MCF 10A (cell line): ENCODE measurements at regions of chr7 and their contacts with region 1.

Region 1: GRCh38 chr7:42831718-42832431 is 80.0 kb downstream of the C7orf25 start:
- DNase-seq: peak; percentile 61
- H3K4me3 Mint-ChIP-seq: no peak overlapping the region
- H3K27ac Mint-ChIP-seq: no peak overlapping the region
- H3K4me1 Mint-ChIP-seq: peaks cover 16% of the 10 kb centered on the region
- H3K27me3 Mint-ChIP-seq: no peaks in the 10 kb centered on the region
- CTCF ChIP-seq: peak; percentile 61

Region 2: GRCh38 chr7:41679566-41679965 is 1152.3 kb before region 1 on chr7:
- CTCF ChIA-PET with region 1: no interaction called
- POLR2A ChIA-PET with region 1: no interaction called
- intact Hi-C with region 1: no loop called
- DNase-seq: no peak
- H3K4me3 Mint-ChIP-seq: no peak overlapping the region
- H3K27ac Mint-ChIP-seq: no peak overlapping the region
- H3K4me1 Mint-ChIP-seq: no peaks in the 10 kb centered on the region
- H3K27me3 Mint-ChIP-seq: no peaks in the 10 kb centered on the region
- CTCF ChIP-seq: no peak

Region 3: DNA sequence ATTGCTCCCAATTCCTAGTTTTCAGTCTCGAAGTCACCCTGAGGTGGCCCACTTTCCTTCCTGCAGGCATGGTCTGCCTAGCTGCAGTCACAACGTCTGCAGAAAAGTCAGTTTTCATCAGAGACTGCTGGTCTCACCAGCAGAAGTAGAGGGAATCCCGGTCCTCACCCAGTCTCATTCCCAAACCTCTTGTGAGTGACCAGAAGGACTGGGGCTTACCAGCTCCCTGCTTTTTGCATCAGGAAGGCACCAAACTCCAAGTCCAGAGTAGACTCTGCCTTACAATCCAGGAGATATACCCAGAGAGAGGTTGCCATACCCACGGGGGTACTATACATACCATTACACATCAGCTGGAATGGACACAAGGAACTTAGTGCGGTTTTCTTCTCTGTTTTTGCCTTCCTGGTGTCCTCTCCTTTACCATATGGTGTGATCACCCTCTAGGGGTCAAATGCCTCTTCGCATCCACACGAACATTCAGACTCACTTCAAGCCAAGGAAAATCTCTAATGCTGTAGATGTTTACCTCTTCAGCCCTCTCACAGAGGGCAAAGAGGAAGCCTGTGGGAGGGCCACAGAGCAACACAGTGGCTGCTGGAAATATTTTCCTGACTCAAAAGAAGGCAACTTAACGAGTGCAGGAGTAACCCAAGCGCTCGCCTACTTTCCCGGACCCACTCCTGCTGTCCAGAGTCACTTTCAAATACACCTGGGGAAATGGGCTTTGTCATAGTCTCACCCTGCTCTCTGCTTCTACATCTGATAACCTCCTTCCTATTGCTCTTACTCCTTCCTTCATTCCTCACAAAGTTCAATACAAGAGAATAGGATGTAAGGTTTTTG is 140.9 kb before region 1 on chr7:
- CTCF ChIA-PET with region 1: interaction called, 11 read pairs
- POLR2A ChIA-PET with region 1: interaction called, 3 read pairs
- intact Hi-C with region 1: no loop called
- DNase-seq: peak; percentile 76
- H3K4me3 Mint-ChIP-seq: no peak overlapping the region
- H3K27ac Mint-ChIP-seq: peak overlapping the region; percentile 19
- H3K4me1 Mint-ChIP-seq: no peaks in the 10 kb centered on the region
- H3K27me3 Mint-ChIP-seq: no peaks in the 10 kb centered on the region
- CTCF ChIP-seq: peak; percentile 71

Region 4: DNA sequence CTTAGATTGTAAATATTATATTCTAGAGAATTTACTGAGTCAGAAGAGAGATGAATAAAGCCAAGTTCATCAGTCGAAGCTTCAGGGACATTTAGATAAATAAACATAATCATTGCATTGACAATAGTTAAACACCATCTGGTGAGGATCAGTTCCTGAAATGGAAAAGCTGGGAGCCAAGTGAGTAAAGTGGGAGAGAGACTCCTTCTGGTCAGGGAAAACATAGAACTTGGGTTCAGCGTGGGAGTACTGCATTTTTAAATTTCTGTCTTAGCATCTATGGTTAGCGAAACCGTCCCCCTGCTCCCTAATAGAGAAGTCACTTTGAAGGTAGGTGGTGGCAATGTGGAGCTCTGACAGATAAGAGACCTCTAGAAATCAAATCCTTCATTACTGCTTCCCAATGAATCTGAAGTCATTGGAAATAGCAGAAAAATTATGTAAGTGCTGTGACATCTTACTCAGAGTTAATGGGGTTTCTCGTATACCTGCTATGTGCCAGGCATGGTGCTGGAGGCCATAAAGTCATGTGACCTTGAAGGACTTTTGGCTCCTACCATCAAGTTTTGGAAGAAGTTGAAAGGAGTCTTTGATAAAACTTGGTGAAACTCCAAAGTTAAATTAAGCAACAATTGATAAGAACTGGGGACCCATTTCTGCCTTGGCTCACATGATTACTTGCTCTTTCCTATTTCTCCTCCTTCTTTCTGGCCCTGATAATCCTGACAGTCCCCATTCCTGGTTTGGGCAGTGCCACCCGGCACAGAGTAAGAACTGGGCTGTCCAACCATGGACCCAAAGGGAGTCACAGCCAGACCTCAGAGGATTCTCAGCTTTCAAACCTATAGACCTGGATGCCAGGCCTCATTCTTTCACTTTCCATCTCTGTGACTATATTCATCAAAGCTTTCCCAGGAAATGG is 131.2 kb before region 1 on chr7:
- CTCF ChIA-PET with region 1: interaction called, 4 read pairs
- POLR2A ChIA-PET with region 1: no interaction called
- intact Hi-C with region 1: loop called (anchors 10 kb)
- DNase-seq: no peak
- H3K4me3 Mint-ChIP-seq: no peak overlapping the region
- H3K27ac Mint-ChIP-seq: no peak overlapping the region
- H3K4me1 Mint-ChIP-seq: no peaks in the 10 kb centered on the region
- H3K27me3 Mint-ChIP-seq: no peaks in the 10 kb centered on the region
- CTCF ChIP-seq: no peak

Region 5: DNA sequence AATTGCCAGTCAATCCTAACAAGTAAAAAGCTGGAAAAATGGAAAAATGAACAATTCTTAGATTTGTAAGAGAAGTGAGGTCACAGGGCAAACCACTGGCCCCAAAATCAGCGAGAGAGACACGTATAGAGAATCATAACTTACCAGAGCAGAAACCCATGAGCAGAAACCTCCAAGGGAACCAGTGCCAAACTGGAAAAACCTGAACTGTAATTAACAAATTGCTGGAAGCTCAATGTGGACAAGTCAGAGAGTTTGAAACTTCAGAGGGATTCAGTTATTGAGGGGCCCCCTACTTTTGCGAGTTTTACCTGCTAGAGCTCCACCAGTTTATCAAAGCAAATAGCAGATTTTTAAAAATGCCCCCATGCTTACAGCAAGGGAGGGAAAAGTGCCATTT is 39.0 kb before region 1 on chr7:
- CTCF ChIA-PET with region 1: no interaction called
- POLR2A ChIA-PET with region 1: no interaction called
- intact Hi-C with region 1: no loop called
- DNase-seq: no peak
- H3K4me3 Mint-ChIP-seq: no peak overlapping the region
- H3K27ac Mint-ChIP-seq: no peak overlapping the region
- H3K4me1 Mint-ChIP-seq: peaks cover 6% of the 10 kb centered on the region
- H3K27me3 Mint-ChIP-seq: no peaks in the 10 kb centered on the region
- CTCF ChIP-seq: no peak

Region 6: GRCh38 chr7:42876182-42877068 is 44.5 kb after region 1 on chr7:
- CTCF ChIA-PET with region 1: interaction called, 9 read pairs
- POLR2A ChIA-PET with region 1: no interaction called
- intact Hi-C with region 1: loop called (anchors 5 kb)
- DNase-seq: peak; percentile 79
- H3K4me3 Mint-ChIP-seq: no peak overlapping the region
- H3K27ac Mint-ChIP-seq: no peak overlapping the region
- H3K4me1 Mint-ChIP-seq: peaks cover 7% of the 10 kb centered on the region
- H3K27me3 Mint-ChIP-seq: no peaks in the 10 kb centered on the region
- CTCF ChIP-seq: peak; percentile 76

Region 7: DNA sequence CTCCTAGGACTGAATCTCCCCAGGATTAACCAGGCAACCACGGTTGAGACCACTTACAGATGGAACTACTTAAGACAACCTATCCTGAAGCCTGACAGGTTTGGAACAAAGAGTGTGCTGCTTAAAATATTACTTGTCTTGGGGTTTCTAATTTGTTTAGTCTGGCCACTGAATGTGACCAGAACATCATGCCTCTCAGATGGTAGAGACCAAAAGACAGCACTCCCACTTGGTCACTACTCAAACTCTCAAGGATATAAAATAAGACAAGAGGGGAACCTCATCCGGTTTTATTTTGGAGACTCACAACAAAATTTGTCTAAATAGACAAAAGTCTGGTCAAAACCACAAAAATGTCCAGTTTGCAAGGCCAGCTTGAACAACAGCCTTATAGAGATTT is 115.6 kb after region 1 on chr7:
- CTCF ChIA-PET with region 1: no interaction called
- POLR2A ChIA-PET with region 1: no interaction called
- intact Hi-C with region 1: no loop called
- DNase-seq: no peak
- H3K4me3 Mint-ChIP-seq: no peak overlapping the region
- H3K27ac Mint-ChIP-seq: no peak overlapping the region
- H3K4me1 Mint-ChIP-seq: no peaks in the 10 kb centered on the region
- H3K27me3 Mint-ChIP-seq: no peaks in the 10 kb centered on the region
- CTCF ChIP-seq: no peak

Region 8: DNA sequence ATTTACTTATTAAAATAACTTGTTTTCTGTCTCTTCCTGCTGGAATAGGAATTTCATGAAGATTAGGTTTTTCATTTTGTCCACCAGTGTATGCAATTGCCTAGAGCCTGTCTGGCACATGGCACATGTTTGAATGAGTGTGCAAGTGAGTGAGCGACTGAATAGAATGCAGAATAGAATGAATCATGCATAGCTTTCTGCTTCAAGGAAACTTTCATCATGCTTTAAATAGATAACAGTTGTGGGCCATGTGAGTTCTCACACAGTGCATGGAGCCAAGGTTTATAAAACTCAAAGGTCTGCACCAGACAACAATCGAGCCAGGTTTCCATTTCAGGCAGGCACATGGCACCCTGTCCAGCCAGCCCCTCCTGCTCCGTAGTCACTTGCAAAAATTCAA is 206.4 kb after region 1 on chr7:
- CTCF ChIA-PET with region 1: no interaction called
- POLR2A ChIA-PET with region 1: no interaction called
- intact Hi-C with region 1: no loop called
- DNase-seq: peak; percentile 22
- H3K4me3 Mint-ChIP-seq: no peak overlapping the region
- H3K27ac Mint-ChIP-seq: no peak overlapping the region
- H3K4me1 Mint-ChIP-seq: no peaks in the 10 kb centered on the region
- H3K27me3 Mint-ChIP-seq: no peaks in the 10 kb centered on the region
- CTCF ChIP-seq: no peak